Posterior vena cava (tissue), 2 donors: ENCODE measurements at regions of chr17 and their contacts with region 1.

Region 1: GRCh38 chr17:31842183-31843069 is 16.6 kb downstream of the COPRS start:
- DNase-seq: peak; percentile 81

Region 2: GRCh38 chr17:31433091-31433790 is 409.2 kb before region 1 on chr17:
- intact Hi-C with region 1: loop called in 1 of 2 experiments (anchors 10 kb)
- DNase-seq: no peak

Region 3: DNA sequence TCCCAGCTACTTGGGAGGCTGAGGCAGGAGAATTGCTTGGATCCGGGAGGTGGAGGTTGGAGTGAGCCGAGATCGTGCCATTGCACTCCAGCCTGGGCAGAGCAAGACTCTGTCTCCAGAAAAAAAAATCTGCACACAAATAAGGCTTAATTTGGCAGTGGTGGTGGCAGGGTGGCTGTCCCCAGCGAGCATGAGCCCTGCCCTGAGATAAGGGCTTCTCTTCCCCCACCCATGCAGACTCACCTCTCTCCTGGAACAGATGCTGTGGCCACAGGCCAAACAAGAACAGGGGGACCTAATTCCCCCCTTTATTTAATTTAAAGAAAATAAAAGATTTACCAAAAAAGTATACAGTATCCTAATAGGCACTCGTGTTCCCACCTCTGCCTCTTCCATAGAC is 293.7 kb before region 1 on chr17:
- intact Hi-C with region 1: no loop called
- DNase-seq: no peak

Region 4: DNA sequence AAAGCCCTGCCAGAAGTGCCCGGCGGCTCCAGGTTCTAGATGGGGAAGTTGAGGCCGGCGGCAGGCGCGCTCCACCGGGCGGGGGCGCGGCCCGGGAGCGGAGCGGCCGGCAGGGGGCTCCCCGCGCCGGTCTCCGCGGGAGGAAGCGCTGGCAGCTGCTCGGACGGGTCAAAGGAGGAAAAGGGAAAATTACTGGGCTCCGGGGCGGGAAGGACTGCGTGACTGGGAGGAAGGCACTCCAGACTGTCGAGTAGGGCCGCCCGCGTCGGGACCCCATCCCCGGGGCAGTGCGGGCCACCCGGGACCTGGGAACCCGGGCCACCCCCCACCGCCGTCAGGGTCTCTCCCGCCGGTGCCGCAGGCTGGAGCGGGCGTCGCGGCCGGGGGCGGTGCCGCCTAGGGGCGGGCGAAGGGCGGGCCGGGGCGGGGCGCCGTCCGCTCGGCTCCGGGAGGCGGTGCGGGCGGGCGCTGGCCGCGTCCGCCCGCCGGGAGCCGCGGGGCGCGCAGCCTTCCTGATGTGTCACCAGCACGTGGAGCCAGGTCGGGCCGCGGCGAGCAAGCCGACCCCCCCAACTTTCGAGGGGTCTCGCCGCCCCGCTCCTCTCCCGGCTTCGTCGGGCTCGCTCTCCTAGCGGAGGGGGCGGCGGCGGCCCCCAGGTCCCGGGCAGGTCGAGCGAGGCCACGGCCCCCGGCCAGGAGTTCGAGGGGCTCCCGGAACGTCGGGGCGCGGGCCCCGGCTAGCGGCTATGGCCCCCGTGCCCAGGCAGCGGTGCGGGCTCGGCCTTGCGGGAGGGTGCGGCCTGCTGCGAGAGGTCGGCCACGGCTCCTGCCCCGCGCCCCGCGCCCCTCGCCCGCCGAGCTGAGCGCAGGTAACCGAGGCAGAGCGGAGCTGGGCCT is 283.4 kb before region 1 on chr17:
- intact Hi-C with region 1: loop called (anchors 2 kb)
- DNase-seq: peak; percentile 94